BJ (cell line): ENCODE measurements at regions of chr11 and their contacts with region 1.

Region 1: GRCh38 chr11:1389103-1389931 is 417 bp upstream of the BRSK2 start:
- DNase-seq: peak; percentile 65
- H3K4me3 ChIP-seq: peak overlapping the region; percentile 65
- H3K27me3 ChIP-seq: peaks cover 8% of the 10 kb centered on the region
- CTCF ChIP-seq: 0 out of 2 replicates have a peak, but pooled peaks have one; percentile 15

Region 2: GRCh38 chr11:1505480-1505879 is 116.2 kb after region 1 on chr11:
- CTCF ChIA-PET with region 1: no interaction called
- POLR2A ChIA-PET with region 1: interaction called, 11 read pairs
- DNase-seq: no peak
- H3K4me3 ChIP-seq: no peak overlapping the region
- H3K27me3 ChIP-seq: no peaks in the 10 kb centered on the region
- CTCF ChIP-seq: no peak